Tibial artery (tissue), 4 donors: ENCODE measurements at regions of chr7 and their contacts with region 1.

Region 1: DNA sequence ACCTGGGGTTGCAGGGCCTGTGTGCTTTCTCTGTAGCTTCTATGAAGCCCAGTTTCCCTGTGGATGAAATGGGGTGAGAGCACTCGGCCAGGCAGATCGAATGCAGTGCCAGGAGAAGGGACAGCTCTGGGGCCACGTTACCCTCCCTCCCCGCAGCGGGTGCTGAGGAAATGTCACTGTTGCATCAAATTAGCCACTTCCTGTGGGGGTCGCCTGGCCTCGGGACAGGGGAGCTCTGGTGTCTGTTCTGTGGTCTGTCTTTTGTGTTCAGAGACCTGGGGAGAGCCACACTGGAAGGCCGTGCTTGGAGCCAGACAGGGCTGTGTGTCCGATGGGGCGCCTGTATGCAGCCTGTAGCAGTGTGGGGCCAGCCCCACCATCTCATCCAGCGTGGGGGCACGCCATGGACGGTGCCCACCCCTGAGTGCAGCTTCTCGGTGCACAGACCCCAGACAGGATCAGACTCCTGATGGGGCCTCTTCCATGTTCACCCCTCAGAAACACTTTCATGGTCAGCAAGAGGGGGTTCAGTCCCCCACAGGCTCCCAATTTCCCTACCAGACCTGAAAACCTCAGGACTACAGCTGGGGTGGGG is 13.6 kb downstream of the TTYH3 start:
- DNase-seq: no peak
- H3K4me3 ChIP-seq: no peak overlapping the region
- H3K27ac ChIP-seq: no peak overlapping the region
- H3K4me1 ChIP-seq: peaks cover 0 to 33% (median 24%) of the 10 kb centered on the region in 4 donors
- H3K27me3 ChIP-seq: no peaks in the 10 kb centered on the region
- CTCF ChIP-seq: no peak

Region 2: DNA sequence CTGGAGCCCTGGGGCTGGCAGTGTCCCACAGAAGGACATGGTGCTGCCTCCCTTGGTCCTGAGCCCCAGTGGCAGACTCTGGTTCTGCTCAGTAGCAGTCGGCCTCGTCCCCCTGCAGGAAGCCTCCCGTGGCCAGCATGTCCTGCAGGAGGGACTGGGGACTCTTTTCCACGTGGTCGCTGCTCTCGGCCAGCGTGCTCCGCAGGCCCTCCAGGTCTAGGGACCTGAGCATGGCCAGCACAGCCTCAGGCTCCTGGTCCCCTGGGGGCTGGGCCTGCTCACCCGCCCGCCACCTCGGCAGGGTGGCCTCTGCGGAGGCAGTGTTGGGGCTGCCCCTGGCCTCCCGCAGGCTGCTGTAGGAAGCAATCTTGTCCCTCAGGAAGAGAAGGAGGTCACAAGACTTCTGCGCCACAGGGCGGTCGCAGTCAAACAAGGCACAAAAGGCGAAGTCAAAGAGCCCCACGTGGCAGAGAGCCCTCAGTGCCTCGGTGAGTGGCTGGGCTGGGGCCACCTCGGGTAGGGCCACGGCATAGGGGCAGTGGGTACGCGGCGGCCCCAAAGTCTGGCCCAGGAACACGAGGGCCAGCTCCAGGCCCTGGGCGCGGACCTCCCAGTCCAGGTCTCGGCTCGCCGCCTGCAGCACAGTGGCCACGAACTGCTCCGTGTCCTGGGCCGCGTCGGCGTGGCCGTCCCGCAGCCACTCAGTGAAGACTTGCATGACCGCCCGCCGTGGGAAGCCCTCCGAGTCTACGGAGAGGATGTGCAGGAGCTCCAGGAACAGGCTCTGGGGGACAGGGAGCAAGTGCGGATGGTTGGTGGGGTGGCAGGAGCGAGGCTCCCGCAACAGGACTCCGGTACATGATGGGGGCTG is 107.2 kb before region 1 on chr7:
- intact Hi-C with region 1: no loop called
- DNase-seq: peak in 1 of 2 donors; percentile 56
- H3K4me3 ChIP-seq: no peak overlapping the region
- H3K27ac ChIP-seq: no peak overlapping the region
- H3K4me1 ChIP-seq: no peaks in the 10 kb centered on the region
- H3K27me3 ChIP-seq: no peaks in the 10 kb centered on the region
- CTCF ChIP-seq: no peak

Region 3: GRCh38 chr7:2597273-2597640 is 48.1 kb before region 1 on chr7:
- intact Hi-C with region 1: loop called (anchors 5 kb)
- DNase-seq: no peak
- H3K4me3 ChIP-seq: no peak overlapping the region
- H3K27ac ChIP-seq: no peak overlapping the region
- H3K4me1 ChIP-seq: no peaks in the 10 kb centered on the region
- H3K27me3 ChIP-seq: no peaks in the 10 kb centered on the region
- CTCF ChIP-seq: no peak

Region 4: DNA sequence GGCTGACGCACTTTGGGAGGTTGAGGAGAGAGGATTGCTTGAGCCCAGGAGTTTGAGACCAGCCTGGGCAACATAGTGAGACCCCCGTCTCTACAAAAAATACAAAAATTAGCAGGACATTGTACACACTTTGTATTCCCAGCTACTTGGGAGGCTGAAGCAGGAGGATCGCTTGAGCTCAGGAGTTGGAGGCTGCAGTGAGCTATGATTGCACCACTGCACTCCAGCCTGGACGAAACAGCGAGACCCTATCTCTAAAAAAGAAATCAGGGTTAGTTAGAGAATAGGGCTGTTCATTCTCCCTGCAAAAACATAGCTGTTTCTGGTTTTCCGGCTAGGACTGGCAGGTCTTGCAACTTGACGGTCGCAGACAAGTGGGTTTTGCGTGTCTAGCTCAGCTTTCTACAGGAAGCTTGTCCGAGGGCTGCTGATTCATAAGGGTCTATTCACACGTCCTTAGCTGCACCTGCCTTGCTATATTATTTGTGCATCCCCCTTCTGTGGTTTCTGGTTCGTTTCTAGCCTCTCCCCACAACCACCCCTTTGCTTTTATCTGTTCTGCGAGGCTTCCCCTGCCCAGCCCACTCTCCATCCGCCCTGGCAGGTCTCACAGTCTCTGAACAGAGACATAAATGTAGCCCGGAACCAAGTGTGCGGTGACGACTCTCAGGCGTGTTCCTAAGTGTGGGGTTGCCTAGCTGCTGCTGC is 53.4 kb after region 1 on chr7:
- intact Hi-C with region 1: no loop called
- DNase-seq: no peak
- H3K4me3 ChIP-seq: no peak overlapping the region
- H3K27ac ChIP-seq: no peak overlapping the region
- H3K4me1 ChIP-seq: peaks cover 0 to 16% (median 9%) of the 10 kb centered on the region in 4 donors
- H3K27me3 ChIP-seq: no peaks in the 10 kb centered on the region
- CTCF ChIP-seq: no peak